ENCODE measurements at regions of chr12 and their contacts with region 1.

Region 1: GRCh38 chr12:112116232-112117060 is 7.9 kb upstream of the NAA25 start:
- DNase-seq: peak; percentile 32 to 81
- H3K4me3 ChIP-seq: peak overlapping the region; percentile 1; the same call in 1 of the 2 replicates
- H3K27ac ChIP-seq: peak overlapping the region; percentile 92
- H3K4me1 ChIP-seq: peaks cover 77% of the 10 kb centered on the region
- H3K27me3 ChIP-seq: no peaks in the 10 kb centered on the region
- CTCF ChIP-seq: no peak

Region 2: DNA sequence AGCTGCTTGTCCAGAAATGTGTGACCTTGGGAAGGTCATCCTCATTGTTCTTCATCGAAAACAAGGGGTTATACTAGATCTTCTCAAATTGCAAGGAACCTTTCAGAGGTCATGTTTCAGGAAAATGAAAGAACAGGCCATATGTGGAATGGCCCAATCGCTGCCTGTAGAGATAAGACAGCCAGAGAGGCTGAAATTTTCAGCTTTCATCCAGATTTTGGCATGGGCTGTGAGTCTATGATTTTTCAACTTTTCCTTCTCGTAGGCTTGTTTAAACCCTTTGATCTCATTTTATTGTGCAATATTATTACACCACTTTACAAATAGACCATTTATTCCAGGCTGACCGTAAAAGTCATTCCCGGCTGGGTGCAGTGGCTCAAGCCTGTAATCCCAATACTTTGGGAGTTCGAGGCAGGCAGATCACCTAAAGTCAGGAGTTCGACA is 500.2 kb before region 1 on chr12:
- CTCF ChIA-PET with region 1: no interaction called
- POLR2A ChIA-PET with region 1: no interaction called
- intact Hi-C with region 1: no loop called
- DNase-seq: no peak
- H3K4me3 ChIP-seq: no peak overlapping the region
- H3K27ac ChIP-seq: no peak overlapping the region
- H3K4me1 ChIP-seq: peaks cover 6% of the 10 kb centered on the region; the same call in 1 of the 2 replicates
- H3K27me3 ChIP-seq: no peaks in the 10 kb centered on the region
- CTCF ChIP-seq: no peak

Region 3: GRCh38 chr12:111692575-111693210 is 423.8 kb before region 1 on chr12:
- CTCF ChIA-PET with region 1: interaction called, 11 read pairs
- POLR2A ChIA-PET with region 1: no interaction called
- intact Hi-C with region 1: no loop called
- DNase-seq: no peak
- H3K4me3 ChIP-seq: no peak overlapping the region
- H3K27ac ChIP-seq: no peak overlapping the region
- H3K4me1 ChIP-seq: no peaks in the 10 kb centered on the region
- H3K27me3 ChIP-seq: no peaks in the 10 kb centered on the region
- CTCF ChIP-seq: 0 out of 2 replicates have a peak, but pooled peaks have one; percentile 30